A673 (cell line): ENCODE measurements at regions of chr2 and their contacts with region 1.

Region 1: DNA sequence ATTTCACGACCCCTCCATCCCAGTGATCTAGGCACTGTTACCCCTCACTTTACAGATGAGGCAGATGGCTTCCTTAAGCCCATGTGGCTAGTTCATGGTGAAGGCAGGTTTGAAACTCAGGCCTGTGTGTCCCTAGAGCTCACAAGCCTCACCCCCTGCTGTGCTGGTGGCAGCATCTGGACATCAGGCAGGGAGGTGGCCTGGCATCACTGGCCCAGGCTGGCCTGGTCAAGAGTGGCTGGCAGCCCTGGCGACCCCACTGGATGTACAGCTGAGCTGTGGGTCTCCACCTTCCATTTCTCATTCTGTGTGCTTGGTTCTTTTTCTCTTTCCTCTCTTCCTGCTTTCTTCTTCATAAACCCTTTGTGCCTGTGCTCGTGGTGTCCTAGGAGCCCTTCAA is 56.3 kb downstream of the BOLA3 start:
- DNase-seq: no peak
- H3K4me3 ChIP-seq: no peak overlapping the region
- H3K27ac ChIP-seq: no peak overlapping the region
- H3K4me1 ChIP-seq: no peaks in the 10 kb centered on the region
- H3K27me3 ChIP-seq: no peaks in the 10 kb centered on the region
- CTCF ChIP-seq: no peak

Region 2: GRCh38 chr2:73408198-73408597 is 683.2 kb before region 1 on chr2:
- CTCF ChIA-PET with region 1: no interaction called
- POLR2A ChIA-PET with region 1: interaction called, 13 read pairs
- intact Hi-C with region 1: no loop called
- DNase-seq: no peak
- H3K4me3 ChIP-seq: no peak overlapping the region
- H3K27ac ChIP-seq: no peak overlapping the region
- H3K4me1 ChIP-seq: no peaks in the 10 kb centered on the region
- H3K27me3 ChIP-seq: no peaks in the 10 kb centered on the region
- CTCF ChIP-seq: no peak

Region 3: GRCh38 chr2:74226648-74227213 is 135.3 kb after region 1 on chr2:
- CTCF ChIA-PET with region 1: no interaction called
- POLR2A ChIA-PET with region 1: no interaction called
- intact Hi-C with region 1: no loop called
- DNase-seq: no peak
- H3K4me3 ChIP-seq: no peak overlapping the region
- H3K27ac ChIP-seq: no peak overlapping the region
- H3K4me1 ChIP-seq: no peaks in the 10 kb centered on the region
- H3K27me3 ChIP-seq: no peaks in the 10 kb centered on the region
- CTCF ChIP-seq: no peak